Transverse colon (tissue), 4 donors: ENCODE measurements at regions of chr12 and their contacts with region 1.

Region 1: DNA sequence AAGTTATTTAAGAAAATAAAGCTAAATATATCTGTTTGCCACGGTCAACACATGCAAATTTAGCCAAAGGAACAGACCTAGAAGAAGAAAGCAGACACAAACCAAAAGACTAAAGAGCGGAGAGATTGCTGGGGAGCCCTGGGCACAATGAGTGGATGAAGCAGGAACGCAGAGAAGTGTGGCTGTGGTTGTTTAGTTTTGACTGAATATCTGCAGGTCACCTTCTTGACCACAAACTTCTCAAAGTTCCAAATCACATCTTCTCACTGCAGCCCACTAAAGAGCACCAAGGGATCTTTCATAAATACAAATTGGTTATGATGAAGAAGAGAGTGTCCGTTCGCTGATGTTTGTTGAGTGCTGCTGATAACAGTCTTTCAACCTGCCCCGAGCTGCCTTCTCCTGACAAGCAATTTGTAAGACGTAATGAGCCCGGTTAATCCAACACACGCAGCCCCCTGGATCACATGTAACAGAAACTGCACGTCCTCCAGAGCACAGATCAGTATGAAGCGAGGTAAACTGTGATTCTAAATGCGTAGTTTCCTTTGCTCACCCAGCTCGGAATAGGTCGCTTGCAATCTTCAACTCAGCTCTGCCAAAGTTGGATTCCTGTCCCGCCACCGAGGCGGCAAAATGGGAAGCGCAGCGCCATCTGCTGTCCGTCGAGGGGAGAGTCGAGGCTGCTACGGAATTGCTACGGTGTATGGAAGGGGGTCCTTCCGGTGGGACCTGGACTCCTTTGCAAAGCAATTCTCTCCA is 120.8 kb downstream of the GXYLT1 start:
- DNase-seq: peak; percentile 64
- H3K4me3 ChIP-seq: peak overlapping the region in 3 of 4 donors; percentile 11 to 38 (median 17)
- H3K27ac ChIP-seq: no peak overlapping the region
- H3K4me1 ChIP-seq: peaks cover 0 to 5% (median 2%) of the 10 kb centered on the region in 4 donors
- H3K27me3 ChIP-seq: peaks cover 7% of the 10 kb centered on the region
- CTCF ChIP-seq: peak; percentile 73 to 91 (median 88)
- EP300 ChIP-seq: no peak
- POLR2A ChIP-seq: no peak

Region 2: DNA sequence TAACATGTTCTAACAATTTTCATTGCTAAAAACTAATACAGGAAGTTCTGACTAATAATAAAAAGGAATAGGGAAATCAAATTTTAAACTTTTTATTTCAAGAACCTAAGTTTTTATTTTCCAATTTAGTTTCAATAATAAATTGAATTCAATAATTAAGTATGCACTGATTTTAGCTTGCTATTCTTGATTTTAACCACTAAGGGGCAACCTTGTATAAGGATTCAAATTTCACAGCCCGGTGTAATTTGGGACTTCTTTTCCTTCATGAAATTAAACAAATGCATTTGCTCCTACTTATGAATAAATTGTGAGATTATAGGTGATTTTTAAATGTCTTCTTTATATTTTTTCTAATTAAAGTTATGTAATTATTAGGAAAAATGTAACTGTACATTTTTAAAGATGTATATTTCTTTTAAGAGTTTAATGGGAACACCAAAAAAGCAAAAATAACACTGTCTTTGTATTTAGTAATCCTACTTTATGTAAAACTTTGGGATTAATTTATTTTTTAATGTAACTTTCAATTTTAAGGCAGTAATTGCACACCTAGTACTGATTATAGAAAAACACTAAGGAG is 1077.2 kb before region 1 on chr12:
- in situ Hi-C with region 1: loop called (anchors 5 to 25 kb)
- intact Hi-C with region 1: loop called (anchors 10 kb)
- DNase-seq: no peak
- H3K4me3 ChIP-seq: no peak overlapping the region
- H3K27ac ChIP-seq: no peak overlapping the region
- H3K4me1 ChIP-seq: no peaks in the 10 kb centered on the region
- H3K27me3 ChIP-seq: no peaks in the 10 kb centered on the region
- CTCF ChIP-seq: peak; percentile 45 to 65 (median 59)
- EP300 ChIP-seq: no peak
- POLR2A ChIP-seq: no peak

Region 3: GRCh38 chr12:41277116-41277945 is 746.6 kb before region 1 on chr12:
- in situ Hi-C with region 1: loop called in 3 of 4 experiments (anchors 10 to 25 kb)
- intact Hi-C with region 1: no loop called
- DNase-seq: no peak
- H3K4me3 ChIP-seq: no peak overlapping the region
- H3K27ac ChIP-seq: no peak overlapping the region
- H3K4me1 ChIP-seq: no peaks in the 10 kb centered on the region
- H3K27me3 ChIP-seq: no peaks in the 10 kb centered on the region
- CTCF ChIP-seq: peak in 4 of 5 experiments; percentile 28 to 45 (median 35)
- EP300 ChIP-seq: no peak
- POLR2A ChIP-seq: no peak